ENCODE measurements at regions of chr14 and their contacts with region 1.

Region 1: DNA sequence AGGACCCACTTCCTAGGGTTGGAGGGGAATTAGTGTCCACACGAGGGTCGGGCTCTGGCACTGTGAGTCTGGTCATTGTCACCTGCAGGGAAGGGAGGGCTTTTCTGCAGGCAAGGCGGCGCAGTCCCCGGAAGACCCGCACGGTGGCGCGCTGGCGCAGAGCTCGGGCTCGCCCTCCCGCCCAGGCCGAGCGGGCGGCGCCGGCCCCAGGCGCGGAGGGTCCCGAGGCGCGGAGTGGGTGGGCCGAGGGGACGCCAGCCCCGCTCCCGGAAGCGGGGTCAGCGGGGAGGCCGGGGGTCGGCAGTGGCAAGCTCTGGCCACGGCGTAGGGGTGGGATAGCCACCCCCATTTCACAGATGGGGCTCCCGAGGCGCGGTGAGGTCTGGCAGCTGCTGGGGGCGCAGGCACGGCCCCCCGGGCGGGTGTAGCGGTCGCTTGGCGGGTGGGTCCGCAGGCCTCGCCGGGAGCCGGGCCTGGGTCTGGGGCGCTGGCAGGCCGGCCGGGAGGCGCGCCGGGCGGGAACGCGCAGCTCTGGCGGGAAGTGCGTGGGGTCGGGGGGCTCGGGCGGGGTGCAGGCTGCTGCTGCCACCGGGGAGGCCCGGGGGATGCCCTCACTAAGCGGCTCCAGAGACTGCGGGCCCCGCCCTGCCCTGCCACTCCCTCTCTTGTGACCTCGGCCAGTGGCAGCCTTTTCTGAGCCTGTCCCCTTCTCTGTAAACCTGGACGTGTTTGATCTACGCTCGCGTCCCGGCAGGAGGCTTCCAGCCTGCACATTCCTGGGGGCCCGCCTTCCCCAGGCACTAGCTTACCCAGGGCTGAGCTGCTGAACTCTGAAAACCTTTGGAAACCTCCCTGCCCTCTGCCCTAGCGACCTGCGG is 46.1 kb downstream of the CYP46A1 start:
- DNase-seq: peak; percentile 93
- ATAC-seq: peak; percentile 75
- H3K4me3 Mint-ChIP-seq: peak overlapping the region; percentile 68
- H3K27ac Mint-ChIP-seq: no peak overlapping the region
- H3K4me1 Mint-ChIP-seq: 0 out of 2 replicates have a peak, but pooled peaks cover 2% of the 10 kb centered on the region
- H3K27me3 Mint-ChIP-seq: no peaks in the 10 kb centered on the region
- CTCF ChIP-seq: peak; percentile 89

Region 2: GRCh38 chr14:99740411-99740810 is 10.2 kb after region 1 on chr14:
- CTCF ChIA-PET with region 1: interaction called, 17 read pairs
- POLR2A ChIA-PET with region 1: no interaction called
- DNase-seq: no peak
- ATAC-seq: no peak
- H3K4me3 Mint-ChIP-seq: no peak overlapping the region
- H3K27ac Mint-ChIP-seq: no peak overlapping the region
- H3K4me1 Mint-ChIP-seq: peaks cover 21% of the 10 kb centered on the region
- H3K27me3 Mint-ChIP-seq: no peaks in the 10 kb centered on the region
- CTCF ChIP-seq: no peak

Region 3: DNA sequence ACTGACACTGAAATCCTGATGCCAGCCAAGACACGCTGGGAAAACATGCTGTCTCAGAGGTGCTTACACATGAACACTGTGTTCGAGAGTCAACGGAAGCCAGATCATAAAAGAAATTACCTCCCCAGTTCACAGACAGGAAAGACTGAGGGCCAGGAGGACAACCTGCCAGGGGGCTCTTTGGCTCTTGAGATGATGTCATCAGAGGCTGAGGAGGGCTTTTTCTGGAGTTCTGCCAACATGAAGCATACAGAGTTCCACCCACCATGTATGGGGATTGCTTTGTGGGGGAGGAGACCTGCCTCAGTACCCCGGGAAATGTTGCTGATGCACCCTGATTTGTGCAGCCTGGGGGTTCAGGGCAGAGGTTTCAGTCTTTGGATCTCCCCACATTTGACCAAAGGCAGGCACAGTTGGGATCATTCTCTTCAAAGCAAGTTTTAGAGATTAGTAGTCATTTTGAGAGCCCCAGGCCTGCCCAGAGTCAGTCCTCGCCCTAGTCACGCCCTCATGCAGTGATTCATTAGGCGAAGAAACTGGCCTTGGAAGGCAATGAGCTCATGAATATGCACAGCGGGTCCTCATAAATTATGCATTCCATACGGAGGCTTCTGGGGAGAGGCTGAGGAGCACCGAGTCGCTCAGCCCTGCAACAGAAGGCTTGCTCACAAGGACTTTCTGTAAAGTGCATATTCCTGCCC is 28.0 kb after region 1 on chr14:
- CTCF ChIA-PET with region 1: interaction called, 21 read pairs
- POLR2A ChIA-PET with region 1: no interaction called
- DNase-seq: peak; percentile 50
- ATAC-seq: peak; percentile 88
- H3K4me3 Mint-ChIP-seq: no peak overlapping the region
- H3K27ac Mint-ChIP-seq: no peak overlapping the region
- H3K4me1 Mint-ChIP-seq: peaks cover 27% of the 10 kb centered on the region
- H3K27me3 Mint-ChIP-seq: no peaks in the 10 kb centered on the region
- CTCF ChIP-seq: no peak

Region 4: GRCh38 chr14:99807413-99808153 is 77.4 kb after region 1 on chr14:
- CTCF ChIA-PET with region 1: interaction called, 11 read pairs
- POLR2A ChIA-PET with region 1: no interaction called
- DNase-seq: peak; percentile 39
- ATAC-seq: peak; percentile 98
- H3K4me3 Mint-ChIP-seq: no peak overlapping the region
- H3K27ac Mint-ChIP-seq: no peak overlapping the region
- H3K4me1 Mint-ChIP-seq: no peaks in the 10 kb centered on the region
- H3K27me3 Mint-ChIP-seq: no peaks in the 10 kb centered on the region
- CTCF ChIP-seq: no peak

Region 5: GRCh38 chr14:99891900-99892299 is 161.7 kb after region 1 on chr14:
- CTCF ChIA-PET with region 1: interaction called, 22 read pairs
- POLR2A ChIA-PET with region 1: no interaction called
- DNase-seq: no peak
- ATAC-seq: no peak
- H3K4me3 Mint-ChIP-seq: no peak overlapping the region
- H3K27ac Mint-ChIP-seq: no peak overlapping the region
- H3K4me1 Mint-ChIP-seq: peaks cover 46% of the 10 kb centered on the region
- H3K27me3 Mint-ChIP-seq: no peaks in the 10 kb centered on the region; the same call in 1 of the 2 replicates
- CTCF ChIP-seq: no peak

Measured in WTC11 (cell line).